CD14-positive monocyte (primary cell): ENCODE measurements at regions of chr9 and their contacts with region 1.

Region 1: DNA sequence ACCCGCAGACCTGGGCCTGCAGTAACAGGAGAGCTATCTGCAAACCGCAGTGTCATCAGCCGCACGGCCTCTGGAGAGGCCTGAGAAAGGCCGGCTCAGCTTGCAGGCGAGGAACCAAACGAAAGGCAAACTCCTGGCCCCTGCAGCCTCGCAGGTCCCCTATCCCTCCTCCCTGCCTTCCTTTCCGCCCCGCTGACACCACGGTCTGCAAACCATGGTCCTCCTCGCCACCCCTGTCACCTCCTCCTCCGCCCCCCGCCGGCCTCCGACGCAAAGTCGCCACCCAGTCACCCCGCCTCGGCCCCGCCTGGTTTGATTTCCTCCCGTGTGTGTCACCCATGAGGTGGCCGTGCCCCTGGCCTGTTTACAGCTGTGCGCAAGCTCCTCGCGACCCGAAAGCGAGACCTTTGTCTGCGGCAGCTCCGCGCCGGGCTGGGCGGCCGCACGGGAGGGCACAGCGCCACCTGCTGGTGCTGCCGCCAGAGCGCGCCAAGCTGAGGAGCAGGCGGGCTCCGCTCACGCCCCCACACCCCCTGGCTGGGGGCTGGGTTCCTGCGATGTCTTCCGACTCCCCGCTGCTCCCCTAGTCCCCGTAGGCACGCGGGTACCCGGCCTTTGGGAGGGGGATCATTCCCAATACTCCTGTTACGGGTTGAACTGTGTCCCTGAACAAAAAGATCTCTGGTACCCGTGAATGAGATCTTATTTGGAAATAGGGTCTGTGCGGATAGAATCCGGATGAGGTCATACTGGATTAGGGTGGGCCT is 19.4 kb downstream of the GBGT1 start:
- DNase-seq: peak; percentile 87 to 97 (median 91)
- H3K4me3 ChIP-seq: peak overlapping the region; percentile 0 to 65 (median 30)
- H3K4me3 Mint-ChIP-seq: peak overlapping the region; percentile 60 to 85
- H3K27ac ChIP-seq: peak overlapping the region in 1 of 2 donors; percentile 31
- H3K27ac Mint-ChIP-seq: peak overlapping the region in 6 of 7 donors; percentile 71 to 89 (median 76)
- H3K4me1 ChIP-seq: peaks cover 32 to 42% of the 10 kb centered on the region in 2 donors
- H3K4me1 Mint-ChIP-seq: peaks cover 40% of the 10 kb centered on the region
- H3K27me3 ChIP-seq: no peaks in the 10 kb centered on the region
- H3K27me3 Mint-ChIP-seq: peaks cover 0 to 10% (median 10%) of the 10 kb centered on the region in 3 donors
- CTCF ChIP-seq: peak; percentile 99

Region 2: DNA sequence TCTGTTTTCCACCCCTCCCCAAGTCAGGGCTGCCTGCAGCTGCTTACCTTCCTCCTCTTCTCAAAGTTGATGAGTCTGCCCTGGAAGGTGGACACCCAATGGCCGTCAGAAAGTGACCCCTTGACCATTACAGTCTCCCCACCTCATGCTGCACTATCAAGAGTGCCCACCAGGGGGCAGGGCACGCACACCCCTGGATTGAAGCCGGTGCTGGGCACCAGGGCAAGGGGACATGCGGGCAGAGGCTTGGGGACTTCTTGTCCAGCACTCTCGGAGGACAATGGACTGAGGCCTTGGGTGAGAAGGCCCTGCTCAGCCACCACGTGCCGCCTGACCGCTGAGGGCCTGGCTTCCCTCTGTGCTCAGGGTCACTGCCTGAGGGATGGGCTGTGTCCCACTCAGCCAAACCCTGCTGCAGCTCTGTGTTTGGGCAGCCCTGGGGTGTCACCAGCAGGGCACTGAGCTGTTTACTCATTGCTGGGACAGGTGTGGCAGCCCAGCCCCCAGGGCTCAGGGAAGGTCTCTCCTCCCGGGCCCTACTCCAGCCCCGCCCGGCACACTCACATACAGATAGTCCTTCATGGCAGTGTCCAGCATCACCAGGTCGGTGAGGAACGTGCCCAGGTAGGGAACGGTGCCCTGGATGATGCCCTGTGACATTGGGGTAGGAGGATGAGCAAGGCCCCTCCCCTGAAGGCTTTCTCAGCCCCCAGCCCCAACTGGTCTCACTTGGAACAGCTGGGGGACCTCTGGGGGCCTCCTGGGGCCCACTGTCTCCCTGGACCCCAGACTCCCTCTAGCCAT is 40.9 kb before region 1 on chr9:
- intact Hi-C with region 1: loop called (anchors 1 kb)
- DNase-seq: peak; percentile 64 to 77 (median 73)
- H3K4me3 ChIP-seq: no peak overlapping the region
- H3K4me3 Mint-ChIP-seq: no peak overlapping the region
- H3K27ac ChIP-seq: no peak overlapping the region
- H3K27ac Mint-ChIP-seq: peak overlapping the region in 6 of 7 donors; percentile 18 to 64 (median 42)
- H3K4me1 ChIP-seq: no peaks in the 10 kb centered on the region
- H3K4me1 Mint-ChIP-seq: peaks cover 2% of the 10 kb centered on the region
- H3K27me3 ChIP-seq: no peaks in the 10 kb centered on the region
- H3K27me3 Mint-ChIP-seq: peaks cover 0 to 5% (median 0%) of the 10 kb centered on the region in 3 donors
- CTCF ChIP-seq: peak; percentile 94